T-cell (primary cell): ENCODE measurements at regions of chr5 and their contacts with region 1.

Region 1: DNA sequence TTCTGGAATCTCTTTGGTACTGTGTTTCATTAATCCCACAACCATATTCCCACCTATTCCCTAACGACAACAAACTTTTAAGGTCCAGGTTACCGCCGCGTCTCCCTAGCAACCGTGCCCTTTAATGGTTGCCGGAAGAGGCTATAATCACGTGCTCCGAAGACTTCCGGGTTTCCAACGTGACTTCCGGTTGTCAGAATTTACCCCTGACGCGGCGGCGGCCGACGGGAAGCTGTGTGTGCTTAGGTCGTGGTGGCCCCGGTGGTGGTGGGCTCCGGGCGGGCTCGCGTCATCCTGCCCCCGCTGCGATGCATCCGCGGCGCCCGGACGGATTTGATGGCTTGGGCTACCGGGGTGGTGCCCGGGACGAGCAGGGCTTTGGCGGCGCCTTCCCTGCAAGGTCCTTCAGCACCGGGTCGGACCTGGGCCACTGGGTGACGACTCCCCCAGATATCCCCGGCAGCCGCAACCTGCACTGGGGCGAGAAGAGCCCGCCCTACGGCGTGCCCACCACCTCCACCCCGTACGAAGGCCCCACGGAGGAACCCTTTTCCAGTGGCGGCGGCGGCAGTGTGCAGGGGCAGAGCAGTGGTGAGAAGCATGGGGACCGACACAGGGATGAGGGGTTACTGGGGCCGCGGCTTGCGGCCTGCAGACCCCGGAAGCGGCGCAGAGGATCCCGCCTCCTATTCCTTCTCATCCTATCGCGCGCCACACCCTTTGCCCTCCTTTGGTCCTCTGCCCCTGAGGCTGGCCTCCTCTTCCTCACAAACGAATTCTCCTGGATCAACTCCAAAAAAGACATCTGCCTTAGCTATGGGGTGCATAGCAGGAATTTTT is at the start of gene SLC25A46:
- DNase-seq: peak; percentile 73 to 95 (median 85)
- ATAC-seq: peak; percentile 88 to 91 (median 90)
- H3K4me3 ChIP-seq: peak within 1 kb of the TSS; percentile 87 to 91
- H3K4me3 Mint-ChIP-seq: peak within 1 kb of the TSS; percentile 88 to 97 (median 89)
- H3K27ac ChIP-seq: peak within 1 kb of the TSS; percentile 83
- H3K27ac Mint-ChIP-seq: peak within 1 kb of the TSS; percentile 91
- H3K4me1 ChIP-seq: peaks cover 10 to 12% of the 10 kb centered on the region in 2 experiments
- H3K4me1 Mint-ChIP-seq: peaks cover 36 to 42% (median 37%) of the 10 kb centered on the region in 3 donors
- H3K27me3 ChIP-seq: peaks cover 0 to 3% of the 10 kb centered on the region in 2 experiments
- H3K27me3 Mint-ChIP-seq: peaks cover 12% of the 10 kb centered on the region in 2 donors
- total RNA-seq, gene SLC25A46: 33.3 to 41.6 (median 40.1) TPM

Region 2: DNA sequence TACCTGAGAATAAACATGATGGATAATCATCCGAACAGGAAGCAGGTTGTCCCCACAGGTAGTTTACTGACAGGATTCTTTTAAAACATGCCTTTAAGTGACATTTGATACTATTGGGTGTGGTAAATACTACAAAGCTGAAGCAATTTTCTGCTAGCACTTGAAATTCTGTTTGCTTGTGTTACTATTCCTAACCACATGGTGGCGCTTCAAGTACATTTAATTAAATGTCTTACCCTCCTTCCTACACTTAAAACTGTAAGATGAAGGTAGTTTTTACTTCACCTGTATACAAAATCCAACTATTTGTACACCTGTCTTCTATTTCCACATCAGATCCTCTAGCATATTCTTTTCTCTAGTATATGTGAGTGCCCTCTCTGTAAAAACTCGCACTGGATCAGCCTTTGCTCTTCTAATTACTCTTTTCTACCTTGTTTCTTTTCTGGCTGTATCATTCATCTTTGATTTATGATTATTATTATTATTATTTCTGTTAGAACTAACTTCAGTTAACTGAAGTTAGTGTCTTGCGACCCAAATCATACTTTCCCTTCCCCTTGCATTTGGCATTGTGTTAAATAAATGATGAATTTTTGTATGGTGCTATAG is 18.2 kb after region 1 on chr5:
- CTCF ChIA-PET with region 1: interaction called in 1 of 2 experiments, 20 read pairs
- POLR2A ChIA-PET with region 1: interaction called in 1 of 2 experiments, 3 read pairs
- DNase-seq: peak in 7 of 35 experiments; percentile 1 to 65 (median 8)
- ATAC-seq: no peak
- H3K4me3 ChIP-seq: no peak overlapping the region
- H3K4me3 Mint-ChIP-seq: no peak overlapping the region
- H3K27ac ChIP-seq: no peak overlapping the region
- H3K27ac Mint-ChIP-seq: no peak overlapping the region
- H3K4me1 ChIP-seq: peaks cover 0 to 4% of the 10 kb centered on the region in 2 experiments
- H3K4me1 Mint-ChIP-seq: peaks cover 16 to 24% (median 23%) of the 10 kb centered on the region in 3 donors
- H3K27me3 ChIP-seq: no peaks in the 10 kb centered on the region
- H3K27me3 Mint-ChIP-seq: no peaks in the 10 kb centered on the region

Region 3: GRCh38 chr5:110855961-110856360 is 116.9 kb after region 1 on chr5:
- CTCF ChIA-PET with region 1: no interaction called
- POLR2A ChIA-PET with region 1: no interaction called
- DNase-seq: no peak
- ATAC-seq: no peak
- H3K4me3 ChIP-seq: no peak overlapping the region
- H3K4me3 Mint-ChIP-seq: no peak overlapping the region
- H3K27ac ChIP-seq: no peak overlapping the region
- H3K27ac Mint-ChIP-seq: no peak overlapping the region
- H3K4me1 ChIP-seq: no peaks in the 10 kb centered on the region
- H3K4me1 Mint-ChIP-seq: no peaks in the 10 kb centered on the region
- H3K27me3 ChIP-seq: no peaks in the 10 kb centered on the region
- H3K27me3 Mint-ChIP-seq: peaks cover 8 to 13% of the 10 kb centered on the region in 2 donors

Region 4: DNA sequence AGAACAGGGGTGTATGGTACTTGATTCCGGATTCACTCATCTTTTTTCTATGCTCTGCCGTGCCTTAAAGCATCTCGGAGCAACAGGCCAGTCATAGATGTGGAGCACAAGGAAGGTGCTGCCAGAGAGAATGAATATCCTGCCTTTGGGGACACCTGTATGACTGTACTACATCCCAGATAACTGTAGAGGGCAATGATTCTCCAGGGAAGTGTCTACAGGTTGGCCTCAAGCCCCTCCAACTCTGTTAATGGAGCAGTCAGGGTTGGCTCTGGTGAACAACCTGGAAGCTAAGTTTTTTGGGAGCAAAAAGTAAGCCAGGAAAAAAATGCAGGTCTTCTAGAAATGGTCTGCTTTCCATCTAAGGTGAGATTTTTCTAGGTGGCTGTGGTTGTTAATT is 946.9 kb after region 1 on chr5:
- CTCF ChIA-PET with region 1: no interaction called
- POLR2A ChIA-PET with region 1: no interaction called
- DNase-seq: peak in 1 of 35 experiments; percentile 8
- ATAC-seq: no peak
- H3K4me3 ChIP-seq: no peak overlapping the region
- H3K4me3 Mint-ChIP-seq: no peak overlapping the region
- H3K27ac ChIP-seq: no peak overlapping the region
- H3K27ac Mint-ChIP-seq: no peak overlapping the region
- H3K4me1 ChIP-seq: no peaks in the 10 kb centered on the region
- H3K4me1 Mint-ChIP-seq: no peaks in the 10 kb centered on the region
- H3K27me3 ChIP-seq: no peaks in the 10 kb centered on the region
- H3K27me3 Mint-ChIP-seq: no peaks in the 10 kb centered on the region